Naive thymus-derived CD4-positive, alpha-beta T cell (primary cell): ENCODE measurements at regions of chr16 and their contacts with region 1.

Region 1: GRCh38 chr16:30747799-30748634 is at the start of gene PHKG2:
- DNase-seq: peak; percentile 82 to 95 (median 92)
- ATAC-seq: peak; percentile 99
- H3K4me3 ChIP-seq: peak within 1 kb of the TSS; percentile 51
- H3K4me3 Mint-ChIP-seq: peak within 1 kb of the TSS; percentile 78 to 98 (median 90)
- H3K27ac ChIP-seq: peak within 1 kb of the TSS; percentile 75
- H3K27ac Mint-ChIP-seq: peak within 1 kb of the TSS; percentile 82 to 95 (median 90)
- H3K4me1 ChIP-seq: peaks cover 4 to 6% of the 10 kb centered on the region in 2 donors
- H3K4me1 Mint-ChIP-seq: peaks cover 18 to 29% (median 27%) of the 10 kb centered on the region in 7 donors
- H3K27me3 ChIP-seq: no peaks in the 10 kb centered on the region
- H3K27me3 Mint-ChIP-seq: no peaks in the 10 kb centered on the region
- total RNA-seq, gene PHKG2: 33.2 to 57.8 (median 46.7) TPM

Region 2: DNA sequence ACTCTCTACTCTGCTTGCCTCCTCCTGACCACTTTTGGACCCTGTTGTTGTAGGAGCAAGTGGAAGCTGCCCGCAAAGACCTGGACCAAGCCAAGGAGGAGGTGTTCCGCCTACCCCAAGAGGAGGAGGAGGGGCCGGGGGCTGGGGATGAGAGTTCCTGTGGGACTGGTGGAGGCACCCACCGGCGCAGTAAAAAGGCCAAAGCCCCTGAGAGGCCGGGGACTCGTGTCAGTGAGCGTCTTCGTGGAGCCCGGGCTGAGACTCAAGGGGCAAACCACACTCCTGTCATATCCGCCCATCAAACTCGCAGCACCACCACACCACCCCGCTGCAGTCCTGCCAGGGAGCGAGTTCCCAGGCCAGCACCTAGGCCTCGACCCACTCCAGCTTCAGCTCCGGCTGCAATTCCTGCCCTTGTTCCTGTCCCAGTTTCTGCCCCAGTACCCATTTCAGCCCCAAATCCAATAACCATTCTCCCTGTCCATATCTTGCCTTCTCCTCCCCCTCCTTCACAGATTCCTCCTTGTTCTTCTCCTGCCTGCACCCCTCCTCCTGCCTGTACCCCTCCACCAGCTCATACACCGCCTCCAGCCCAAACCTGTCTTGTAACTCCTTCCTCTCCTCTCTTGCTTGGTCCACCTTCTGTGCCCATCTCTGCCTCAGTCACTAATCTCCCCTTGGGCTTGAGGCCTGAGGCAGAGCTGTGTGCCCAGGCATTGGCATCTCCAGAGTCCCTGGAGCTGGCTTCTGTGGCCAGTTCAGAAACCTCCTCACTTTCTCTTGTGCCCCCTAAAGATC is 10.8 kb before region 1 on chr16:
- CTCF ChIA-PET with region 1: no interaction called
- POLR2A ChIA-PET with region 1: interaction called, 15 read pairs
- intact Hi-C with region 1: no loop called
- DNase-seq: no peak
- ATAC-seq: no peak
- H3K4me3 ChIP-seq: no peak overlapping the region
- H3K4me3 Mint-ChIP-seq: no peak overlapping the region
- H3K27ac ChIP-seq: no peak overlapping the region
- H3K27ac Mint-ChIP-seq: peak overlapping the region in 1 of 9 donors; percentile 41
- H3K4me1 ChIP-seq: no peaks in the 10 kb centered on the region
- H3K4me1 Mint-ChIP-seq: peaks cover 6 to 15% (median 9%) of the 10 kb centered on the region in 7 donors
- H3K27me3 ChIP-seq: no peaks in the 10 kb centered on the region
- H3K27me3 Mint-ChIP-seq: no peaks in the 10 kb centered on the region

Region 3: DNA sequence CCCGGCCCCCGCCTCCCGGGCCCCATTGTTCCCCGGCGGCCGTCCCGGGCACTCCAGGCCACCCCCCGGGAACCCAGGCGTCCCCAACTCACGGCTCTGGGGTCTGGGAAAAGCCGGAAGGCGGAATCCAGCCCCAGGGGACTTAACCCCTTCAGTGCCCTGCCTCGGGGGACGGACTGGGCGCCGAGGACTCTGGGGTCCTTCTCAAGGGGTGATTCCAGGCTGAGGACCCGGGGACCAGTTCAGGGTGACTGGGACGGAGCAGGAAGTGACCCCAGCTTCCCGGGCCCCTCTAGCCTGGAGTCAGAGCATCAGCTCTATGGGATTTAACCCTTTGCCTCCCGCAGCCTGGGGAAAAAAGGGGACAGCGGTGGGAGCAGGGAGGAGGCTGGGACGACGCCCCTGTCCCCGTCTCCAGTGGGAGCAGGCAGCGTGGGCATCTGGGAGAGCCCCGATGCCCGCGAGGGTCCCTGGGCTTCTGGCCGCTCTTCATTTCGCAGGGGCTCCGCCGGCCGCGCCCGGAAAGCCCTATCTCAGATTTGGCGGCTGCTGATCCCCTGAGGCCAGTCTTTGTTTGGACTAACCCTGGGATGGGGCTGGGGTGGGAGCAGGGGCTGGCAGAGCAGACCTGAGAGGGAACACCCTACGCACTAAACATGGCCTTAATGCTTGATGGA is 39.1 kb after region 1 on chr16 and contains the start of gene ZNF629:
- CTCF ChIA-PET with region 1: no interaction called
- POLR2A ChIA-PET with region 1: interaction called, 3 read pairs
- intact Hi-C with region 1: loop called in 1 of 2 experiments (anchors 1 kb)
- DNase-seq: peak in 5 of 9 donors; percentile 32 to 42 (median 33)
- ATAC-seq: peak; percentile 70
- H3K4me3 ChIP-seq: peak within 1 kb of the TSS; percentile 60
- H3K4me3 Mint-ChIP-seq: peak within 1 kb of the TSS; percentile 74 to 94 (median 88)
- H3K27ac ChIP-seq: peak within 1 kb of the TSS; percentile 68
- H3K27ac Mint-ChIP-seq: peak within 1 kb of the TSS in 8 of 9 donors; percentile 8 to 85 (median 50)
- H3K4me1 ChIP-seq: peaks cover 7% of the 10 kb centered on the region in 2 donors
- H3K4me1 Mint-ChIP-seq: peaks cover 0 to 25% (median 22%) of the 10 kb centered on the region in 7 donors
- H3K27me3 ChIP-seq: peaks cover 0 to 7% of the 10 kb centered on the region in 2 donors
- H3K27me3 Mint-ChIP-seq: peaks cover 0 to 43% (median 0%) of the 10 kb centered on the region in 5 donors
- total RNA-seq, gene ZNF629: 2.4 to 11.1 (median 4.2) TPM